Activated T-helper 1 cell treated with anti-CD3 and anti-CD28 coated beads, Interleukin-12 subunit alpha, Interleukin-12 subunit beta, Interleukin-2, Interleukin-4 antibody, amounts not matched to agents 30 ng/mL and 10 ng/mL and 1 ng/mL, durations not matched to agents 14 hours and 24 hours and 36 hours (primary cell): ENCODE measurements at regions of chr7 and their contacts with region 1.

Region 1: DNA sequence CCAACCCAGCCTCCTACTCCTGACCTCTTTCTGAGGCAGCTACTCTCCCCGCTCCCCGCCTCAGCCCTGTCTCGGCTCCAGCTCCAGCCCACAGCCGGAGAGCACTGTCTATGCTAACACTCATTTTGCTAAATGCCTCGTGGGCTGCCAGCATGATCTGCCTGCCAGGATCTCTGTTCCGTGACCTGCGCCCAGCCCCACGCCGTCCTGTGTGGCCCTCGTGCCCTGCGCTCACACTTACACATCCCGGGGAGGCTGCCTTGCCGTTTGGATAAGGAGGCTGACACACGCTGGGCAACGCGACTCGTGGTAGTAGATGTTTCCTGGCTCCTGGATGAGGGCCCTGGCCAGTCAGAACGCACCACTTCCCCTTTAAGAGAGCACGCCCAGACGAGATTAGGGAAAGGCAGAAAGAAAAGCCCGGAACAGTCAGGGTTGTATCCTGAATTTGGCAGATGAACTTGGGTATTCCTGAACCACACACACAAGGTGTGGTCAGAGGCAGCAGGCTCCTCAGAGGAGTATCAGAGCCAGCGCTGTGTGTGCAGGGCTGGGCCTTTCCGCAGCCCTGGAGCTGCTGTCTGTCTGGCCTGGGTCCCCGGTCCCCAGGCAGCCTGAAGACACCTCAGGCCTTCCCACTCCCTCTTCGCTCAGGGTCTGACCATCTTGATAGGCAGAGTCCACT is 97.7 kb upstream of the EFCAB10 start:
- DNase-seq: no peak
- H3K4me3 Mint-ChIP-seq: peak overlapping the region; percentile 89
- H3K27ac Mint-ChIP-seq: peak overlapping the region; percentile 93
- H3K4me1 Mint-ChIP-seq: peaks cover 57% of the 10 kb centered on the region
- H3K27me3 Mint-ChIP-seq: peaks cover 1% of the 10 kb centered on the region

Region 2: DNA sequence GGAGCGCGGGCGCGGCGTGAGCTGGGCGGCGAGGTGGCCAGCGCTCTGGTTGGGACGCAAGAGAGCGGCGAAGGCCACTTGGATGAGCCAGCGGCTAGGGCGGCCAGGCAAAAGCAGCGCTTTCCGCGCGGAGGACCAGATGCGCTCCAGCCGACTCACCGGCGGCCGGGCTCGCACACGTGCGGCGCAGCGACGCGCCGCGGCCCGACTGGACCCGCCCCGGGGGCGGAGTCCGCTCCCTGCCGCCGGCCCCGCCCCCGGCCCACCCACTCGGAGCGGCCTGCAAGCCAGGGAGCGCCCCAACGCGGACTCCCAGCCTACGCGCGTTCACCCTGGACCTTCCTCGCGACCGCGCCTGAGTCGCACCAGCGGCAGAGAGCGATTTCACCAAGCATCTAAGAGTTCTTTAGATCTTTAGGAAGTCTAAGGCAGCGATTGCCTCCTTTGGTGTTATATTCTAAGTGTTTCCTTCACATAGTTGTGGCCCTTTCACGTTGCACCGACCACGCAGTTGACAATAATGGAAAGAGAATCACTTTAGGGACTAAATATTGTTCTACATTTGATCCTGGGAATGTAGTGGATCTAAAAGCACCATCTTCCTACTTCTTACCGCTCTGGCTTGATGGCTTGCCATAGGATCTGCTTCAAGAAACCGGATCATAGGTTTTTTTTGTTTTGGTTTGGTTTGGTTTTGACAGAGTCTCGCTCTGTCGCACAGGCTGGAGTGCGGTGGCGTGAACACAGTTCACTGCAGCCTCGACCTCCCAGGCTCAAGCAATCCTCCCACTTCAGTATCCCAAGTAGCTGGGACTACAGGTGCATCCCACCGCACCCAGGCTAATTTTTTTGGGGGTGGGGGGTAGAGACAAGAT is 156.7 kb before region 1 on chr7 and contains the start of gene PUS7:
- intact Hi-C with region 1: loop called (anchors 5 kb)
- DNase-seq: peak; percentile 71
- H3K4me3 Mint-ChIP-seq: peak within 1 kb of the TSS; percentile 98
- H3K27ac Mint-ChIP-seq: peak within 1 kb of the TSS; percentile 96
- H3K4me1 Mint-ChIP-seq: peaks cover 14% of the 10 kb centered on the region
- H3K27me3 Mint-ChIP-seq: no peaks in the 10 kb centered on the region
- total RNA-seq, gene PUS7: 47.8 and 50.7 TPM in 2 replicates

Region 3: GRCh38 chr7:105664816-105665525 is 14.0 kb before region 1 on chr7:
- intact Hi-C with region 1: no loop called
- DNase-seq: no peak
- H3K4me3 Mint-ChIP-seq: no peak overlapping the region
- H3K27ac Mint-ChIP-seq: no peak overlapping the region
- H3K4me1 Mint-ChIP-seq: no peaks in the 10 kb centered on the region
- H3K27me3 Mint-ChIP-seq: no peaks in the 10 kb centered on the region

Region 4: GRCh38 chr7:106153891-106154449 is 475.0 kb after region 1 on chr7:
- intact Hi-C with region 1: no loop called
- DNase-seq: peak; percentile 57
- H3K4me3 Mint-ChIP-seq: no peak overlapping the region
- H3K27ac Mint-ChIP-seq: peak overlapping the region; percentile 13
- H3K4me1 Mint-ChIP-seq: no peaks in the 10 kb centered on the region
- H3K27me3 Mint-ChIP-seq: peaks cover 41% of the 10 kb centered on the region